Heart left ventricle (tissue), 16 donors: ENCODE measurements at regions of chr16 and their contacts with region 1.

Region 1: DNA sequence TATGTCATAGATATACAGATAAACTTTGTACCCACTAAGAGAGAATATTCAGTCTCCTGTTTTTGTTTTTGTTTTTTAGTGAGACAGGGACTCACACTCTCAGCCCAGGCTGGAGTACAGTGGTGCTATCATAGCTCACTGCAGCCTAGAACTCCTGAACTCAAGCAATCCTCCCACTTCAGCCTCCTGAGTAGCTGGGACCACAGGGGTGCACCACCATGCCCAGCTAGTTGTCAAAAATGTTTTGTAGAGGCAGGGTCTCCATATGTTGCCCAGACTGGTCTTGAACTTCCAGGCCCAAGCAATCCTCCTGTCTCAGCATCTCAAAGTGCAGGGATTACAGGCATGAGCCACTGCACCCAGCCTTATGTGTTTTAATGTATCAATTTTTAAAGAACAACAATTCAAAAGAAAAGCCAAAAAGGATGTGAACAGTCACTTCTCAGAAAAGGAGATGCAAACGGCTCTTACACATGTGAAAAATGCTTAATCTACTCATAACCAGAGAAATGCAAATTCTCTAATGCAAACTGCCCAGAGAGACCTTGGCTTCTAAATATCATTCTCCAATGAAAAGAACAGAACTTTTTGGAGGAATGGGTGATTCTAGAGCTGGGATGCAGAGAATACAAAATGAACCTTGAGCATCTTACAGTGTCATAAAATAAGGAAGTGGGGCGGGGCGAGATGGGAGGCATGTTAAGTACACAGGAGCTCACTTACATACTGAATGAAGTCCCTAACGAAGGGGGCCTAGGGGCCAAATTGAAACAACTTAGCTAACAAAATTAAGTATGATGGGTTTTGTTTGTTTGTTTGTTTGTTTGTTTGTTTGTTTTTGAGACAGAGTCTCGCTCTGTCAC is 7.3 kb upstream of the CMTM3 start:
- DNase-seq: no peak
- ATAC-seq: no peak
- H3K4me3 ChIP-seq: no peak overlapping the region
- H3K27ac ChIP-seq: no peak overlapping the region
- H3K4me1 ChIP-seq: no peaks in the 10 kb centered on the region
- H3K27me3 ChIP-seq: no peaks in the 10 kb centered on the region
- CTCF ChIP-seq: no peak
- POLR2A ChIP-seq: no peak

Region 2: GRCh38 chr16:66562407-66562806 is 34.8 kb before region 1 on chr16:
- intact Hi-C with region 1: loop called in 3 of 10 experiments (anchors 5 to 10 kb)
- DNase-seq: no peak
- ATAC-seq: no peak
- H3K4me3 ChIP-seq: no peak overlapping the region
- H3K27ac ChIP-seq: peak overlapping the region in 1 of 12 donors; percentile 0
- H3K4me1 ChIP-seq: peaks cover 0 to 20% (median 0%) of the 10 kb centered on the region in 12 donors
- H3K27me3 ChIP-seq: no peaks in the 10 kb centered on the region
- CTCF ChIP-seq: peak in 5 of 12 donors; percentile 8 to 29 (median 23)
- POLR2A ChIP-seq: no peak

Region 3: GRCh38 chr16:66639091-66639885 is 42.1 kb after region 1 on chr16:
- intact Hi-C with region 1: no loop called
- DNase-seq: peak in 1 of 5 donors; percentile 4
- ATAC-seq: no peak
- H3K4me3 ChIP-seq: no peak overlapping the region
- H3K27ac ChIP-seq: no peak overlapping the region
- H3K4me1 ChIP-seq: no peaks in the 10 kb centered on the region
- H3K27me3 ChIP-seq: no peaks in the 10 kb centered on the region
- CTCF ChIP-seq: no peak
- POLR2A ChIP-seq: no peak